Prostate gland (tissue), 2 donors: ENCODE measurements at regions of chr17 and their contacts with region 1.

Region 1: GRCh38 chr17:40622509-40622928 is 25.1 kb downstream of the SMARCE1 start:
- DNase-seq: no peak
- H3K4me3 ChIP-seq: no peak overlapping the region
- H3K27ac ChIP-seq: no peak overlapping the region
- H3K4me1 ChIP-seq: peaks cover 6% of the 10 kb centered on the region
- H3K27me3 ChIP-seq: no peaks in the 10 kb centered on the region
- CTCF ChIP-seq: no peak
- POLR2A ChIP-seq: no peak

Region 2: GRCh38 chr17:40726919-40727318 is 104.4 kb after region 1 on chr17:
- intact Hi-C with region 1: loop called (anchors 10 kb)
- DNase-seq: no peak
- H3K4me3 ChIP-seq: no peak overlapping the region
- H3K27ac ChIP-seq: no peak overlapping the region
- H3K4me1 ChIP-seq: no peaks in the 10 kb centered on the region
- H3K27me3 ChIP-seq: no peaks in the 10 kb centered on the region
- CTCF ChIP-seq: peak in 2 of 4 experiments; percentile 38 to 48
- POLR2A ChIP-seq: no peak